CD4-positive, alpha-beta memory T cell (primary cell): ENCODE measurements at regions of chr19 and their contacts with region 1.

Region 1: GRCh38 chr19:44689056-44689895 is 9.7 kb upstream of the CEACAM16 start:
- DNase-seq: peak; percentile 66 to 71 (median 68)
- H3K4me3 ChIP-seq: no peak overlapping the region
- H3K4me3 Mint-ChIP-seq: no peak overlapping the region
- H3K27ac ChIP-seq: no peak overlapping the region
- H3K27ac Mint-ChIP-seq: peak overlapping the region in 6 of 7 donors; percentile 8 to 80 (median 58)
- H3K4me1 ChIP-seq: peaks cover 22% of the 10 kb centered on the region
- H3K4me1 Mint-ChIP-seq: peaks cover 20 to 33% (median 26%) of the 10 kb centered on the region in 4 donors
- H3K27me3 ChIP-seq: no peaks in the 10 kb centered on the region
- H3K27me3 Mint-ChIP-seq: peaks cover 8 to 18% of the 10 kb centered on the region in 2 donors

Region 2: DNA sequence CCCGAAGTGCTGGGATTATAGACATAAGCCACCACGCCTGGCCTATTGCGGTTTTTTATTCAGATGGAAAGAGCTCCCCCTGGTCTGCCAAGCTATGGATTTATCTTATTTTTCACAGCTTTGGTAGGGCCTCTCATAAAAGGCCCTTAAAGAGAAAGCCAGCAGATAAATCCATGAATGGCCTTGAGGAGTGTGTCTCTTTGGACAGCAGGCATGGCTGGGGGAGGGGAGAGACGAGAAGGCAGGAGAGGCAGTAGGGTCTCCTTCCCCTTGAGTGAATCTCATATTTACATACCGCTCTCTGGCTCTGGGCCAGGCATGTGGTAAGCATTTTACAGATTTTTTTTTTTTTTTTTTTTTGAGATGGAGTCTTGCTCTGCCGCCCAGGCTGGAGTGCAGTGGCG is 587.0 kb after region 1 on chr19:
- CTCF ChIA-PET with region 1: no interaction called
- POLR2A ChIA-PET with region 1: no interaction called
- intact Hi-C with region 1: no loop called
- DNase-seq: no peak
- H3K4me3 ChIP-seq: no peak overlapping the region
- H3K4me3 Mint-ChIP-seq: no peak overlapping the region
- H3K27ac ChIP-seq: no peak overlapping the region
- H3K27ac Mint-ChIP-seq: no peak overlapping the region
- H3K4me1 ChIP-seq: no peaks in the 10 kb centered on the region
- H3K4me1 Mint-ChIP-seq: peaks cover 0 to 4% (median 0%) of the 10 kb centered on the region in 4 donors
- H3K27me3 ChIP-seq: no peaks in the 10 kb centered on the region
- H3K27me3 Mint-ChIP-seq: no peaks in the 10 kb centered on the region

Region 3: GRCh38 chr19:45336696-45337251 is 647.5 kb after region 1 on chr19:
- CTCF ChIA-PET with region 1: no interaction called
- POLR2A ChIA-PET with region 1: no interaction called
- intact Hi-C with region 1: loop called (anchors 5 kb)
- DNase-seq: no peak
- H3K4me3 ChIP-seq: no peak overlapping the region
- H3K4me3 Mint-ChIP-seq: no peak overlapping the region
- H3K27ac ChIP-seq: no peak overlapping the region
- H3K27ac Mint-ChIP-seq: no peak overlapping the region
- H3K4me1 ChIP-seq: no peaks in the 10 kb centered on the region
- H3K4me1 Mint-ChIP-seq: peaks cover 2 to 6% (median 4%) of the 10 kb centered on the region in 4 donors
- H3K27me3 ChIP-seq: peaks cover 5% of the 10 kb centered on the region
- H3K27me3 Mint-ChIP-seq: peaks cover 18 to 22% of the 10 kb centered on the region in 2 donors